ENCODE measurements at regions of chr5 and their contacts with region 1.

Region 1: DNA sequence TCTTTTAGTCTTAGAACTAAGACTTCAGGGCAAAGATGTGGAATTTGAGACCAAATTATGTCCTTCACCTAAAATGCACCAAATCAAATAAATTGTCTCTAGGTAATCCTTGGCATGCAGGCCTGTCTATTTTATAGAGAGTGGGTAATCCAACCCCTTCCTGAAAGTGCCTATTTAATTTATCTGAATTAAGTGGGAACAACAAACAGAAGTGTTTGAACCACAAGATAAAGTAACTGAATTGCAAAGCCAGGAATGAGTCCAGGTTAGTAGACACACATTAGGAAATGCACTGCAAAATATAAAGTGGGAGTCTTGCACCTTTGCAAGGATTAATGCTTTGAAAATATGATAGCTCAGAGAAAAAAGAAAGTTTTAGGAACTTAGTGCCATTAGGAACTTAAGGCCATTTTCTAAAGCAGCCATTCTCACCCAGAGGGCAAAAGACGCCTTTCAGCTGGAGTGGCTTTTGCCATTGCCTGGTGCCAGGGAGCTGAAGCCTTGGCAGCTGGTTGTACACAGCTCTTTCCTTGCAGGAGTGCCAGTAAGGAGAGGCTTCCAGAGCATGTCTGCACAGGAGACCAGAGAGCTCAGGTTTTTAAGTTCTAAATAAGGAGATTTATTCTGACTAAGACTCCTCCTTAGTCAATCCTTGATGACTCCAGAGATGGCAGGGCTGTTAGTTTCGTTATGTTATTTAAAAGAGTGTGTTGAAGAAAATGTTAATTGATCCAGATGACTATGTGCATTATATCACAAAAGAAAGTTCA is 151.7 kb upstream of the ELL2 start:
- DNase-seq: no peak
- H3K4me3 ChIP-seq: no peak overlapping the region
- H3K27ac ChIP-seq: no peak overlapping the region
- H3K27me3 ChIP-seq: no peaks in the 10 kb centered on the region
- CTCF ChIP-seq: no peak

Region 2: DNA sequence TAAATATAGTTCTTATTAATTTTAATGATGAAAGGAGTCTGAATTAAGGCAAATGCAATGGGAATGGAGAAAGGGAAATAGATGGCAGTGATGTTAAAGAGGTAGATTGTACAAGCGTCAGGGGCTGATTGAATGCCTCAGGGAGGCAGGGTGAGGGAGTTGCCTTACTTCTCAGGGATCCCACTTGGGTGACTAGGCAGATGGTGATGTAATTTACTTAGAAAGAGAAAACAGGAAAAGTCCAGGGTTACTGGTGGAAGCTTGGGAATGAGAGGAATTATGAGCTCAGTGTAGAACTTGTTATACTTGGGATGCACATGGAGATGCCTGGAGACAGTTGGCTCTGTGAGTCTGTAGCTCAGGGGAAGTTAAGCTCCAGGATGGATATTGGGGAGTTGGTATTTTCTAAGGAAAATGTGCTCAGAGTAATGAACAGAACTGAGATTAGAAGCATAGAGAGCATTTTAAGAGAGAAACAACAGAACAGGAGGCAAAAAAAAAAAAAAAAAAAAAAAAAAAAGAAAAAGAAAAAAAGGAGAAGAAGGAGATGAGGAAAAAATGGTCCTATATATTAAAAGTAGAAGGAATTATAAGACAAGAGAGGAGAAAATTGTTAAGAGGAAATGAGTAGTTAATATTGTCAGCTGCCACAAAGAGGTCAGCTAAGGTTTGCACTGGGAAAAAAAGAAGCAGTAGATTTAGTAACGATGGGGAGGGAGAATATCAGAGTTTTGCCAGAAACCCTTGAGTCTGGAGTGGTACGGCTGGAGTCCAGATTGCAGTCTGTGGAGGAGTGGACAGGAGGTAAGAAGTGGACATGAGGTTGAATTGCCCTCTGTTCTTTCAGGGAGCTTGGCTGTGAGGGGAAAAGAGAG is 63.7 kb before region 1 on chr5:
- CTCF ChIA-PET with region 1: no interaction called
- POLR2A ChIA-PET with region 1: interaction called, 18 read pairs
- DNase-seq: no peak
- H3K4me3 ChIP-seq: no peak overlapping the region
- H3K27ac ChIP-seq: no peak overlapping the region
- H3K27me3 ChIP-seq: no peaks in the 10 kb centered on the region
- CTCF ChIP-seq: no peak

Measured in AG04450 (cell line).